ENCODE measurements at regions of chr2 and their contacts with region 1.

Region 1: DNA sequence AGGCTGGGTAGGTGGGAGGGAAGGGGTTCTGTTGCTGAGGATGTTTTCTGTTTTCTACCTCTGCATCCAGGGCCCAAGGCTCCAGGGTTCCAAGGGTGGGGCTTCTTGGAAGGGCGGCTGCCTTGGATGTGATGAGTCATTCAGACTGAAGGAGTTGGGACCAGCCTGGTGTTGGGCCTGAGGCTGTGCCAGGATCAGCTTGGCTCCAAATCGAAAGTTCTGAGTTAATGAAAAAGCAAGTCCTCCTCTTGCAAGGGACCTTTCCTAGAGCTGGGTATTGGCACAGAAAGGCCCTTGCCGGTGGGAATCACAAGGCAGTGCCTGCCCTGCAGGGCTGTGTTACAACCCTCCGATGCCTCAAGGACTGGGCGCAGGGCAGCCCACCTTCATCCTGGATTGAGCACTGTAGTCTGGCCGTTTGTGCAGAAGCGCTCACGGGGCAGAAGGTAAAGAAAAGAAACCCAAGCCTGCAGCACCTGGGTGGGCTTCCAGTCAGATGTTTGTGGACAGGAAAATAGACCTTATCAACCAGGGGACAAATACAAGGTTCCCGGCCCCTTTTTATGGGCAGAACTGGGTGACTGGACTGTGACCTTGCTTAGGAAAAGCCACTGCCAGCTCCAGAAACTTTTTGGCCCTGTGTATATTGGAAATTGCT is 52.5 kb upstream of the MCFD2 start:
- DNase-seq: peak; percentile 90 to 91
- H3K4me3 ChIP-seq: peak overlapping the region; percentile 36; the same call in 1 of the 2 replicates
- H3K27ac ChIP-seq: peak overlapping the region; percentile 93
- H3K4me1 ChIP-seq: peaks cover 89% of the 10 kb centered on the region
- H3K27me3 ChIP-seq: no peaks in the 10 kb centered on the region
- CTCF ChIP-seq: no peak

Region 2: GRCh38 chr2:46780801-46781445 is 187.2 kb before region 1 on chr2:
- CTCF ChIA-PET with region 1: no interaction called
- POLR2A ChIA-PET with region 1: no interaction called
- intact Hi-C with region 1: no loop called
- DNase-seq: no peak
- H3K4me3 ChIP-seq: no peak overlapping the region
- H3K27ac ChIP-seq: no peak overlapping the region
- H3K4me1 ChIP-seq: peaks cover 9% of the 10 kb centered on the region
- H3K27me3 ChIP-seq: no peaks in the 10 kb centered on the region
- CTCF ChIP-seq: no peak

Region 3: GRCh38 chr2:46850777-46851176 is 117.3 kb before region 1 on chr2:
- CTCF ChIA-PET with region 1: no interaction called
- POLR2A ChIA-PET with region 1: no interaction called
- intact Hi-C with region 1: loop called (anchors 2 kb)
- DNase-seq: peak; percentile 67 to 75
- H3K4me3 ChIP-seq: no peak overlapping the region
- H3K27ac ChIP-seq: peak overlapping the region; percentile 45
- H3K4me1 ChIP-seq: peaks cover 77% of the 10 kb centered on the region
- H3K27me3 ChIP-seq: no peaks in the 10 kb centered on the region
- CTCF ChIP-seq: no peak

Region 4: DNA sequence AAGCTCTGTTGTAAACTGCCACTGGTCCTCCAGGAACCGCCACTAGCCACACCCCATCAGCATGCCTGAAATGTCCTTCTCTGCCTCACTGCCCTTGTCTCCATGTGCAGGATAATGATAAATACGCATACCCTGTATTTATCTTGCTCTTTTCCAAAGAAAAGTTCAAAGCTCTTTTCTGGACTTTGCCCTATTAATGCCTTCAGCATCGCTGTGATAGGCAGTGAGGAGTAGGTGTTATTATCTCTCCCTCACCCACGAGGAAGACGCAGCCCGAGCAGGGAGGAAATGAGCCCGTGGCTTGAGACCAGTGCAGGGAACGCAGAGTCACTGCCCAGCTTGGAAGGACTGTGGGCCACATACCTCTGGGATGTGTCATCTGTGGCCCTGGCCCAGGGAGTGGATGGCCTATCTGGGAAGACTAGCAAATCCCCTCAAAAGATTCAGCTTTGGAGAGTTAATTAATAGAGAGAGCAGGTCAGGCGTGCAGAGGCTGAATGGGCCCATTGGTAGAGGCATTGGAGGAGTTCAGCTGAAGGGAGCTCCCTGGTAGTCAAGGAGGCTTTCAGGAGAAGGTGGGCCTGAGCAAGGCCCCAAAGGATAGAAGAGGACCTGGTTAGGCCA is 13.1 kb before region 1 on chr2:
- CTCF ChIA-PET with region 1: interaction called, 4 read pairs
- POLR2A ChIA-PET with region 1: interaction called, 13 read pairs
- intact Hi-C with region 1: loop called (anchors 1 kb)
- DNase-seq: peak; percentile 90 to 95
- H3K4me3 ChIP-seq: peak overlapping the region; percentile 4; the same call in 1 of the 2 replicates
- H3K27ac ChIP-seq: peak overlapping the region; percentile 76
- H3K4me1 ChIP-seq: peaks cover 38% of the 10 kb centered on the region
- H3K27me3 ChIP-seq: no peaks in the 10 kb centered on the region
- CTCF ChIP-seq: no peak

Region 5: DNA sequence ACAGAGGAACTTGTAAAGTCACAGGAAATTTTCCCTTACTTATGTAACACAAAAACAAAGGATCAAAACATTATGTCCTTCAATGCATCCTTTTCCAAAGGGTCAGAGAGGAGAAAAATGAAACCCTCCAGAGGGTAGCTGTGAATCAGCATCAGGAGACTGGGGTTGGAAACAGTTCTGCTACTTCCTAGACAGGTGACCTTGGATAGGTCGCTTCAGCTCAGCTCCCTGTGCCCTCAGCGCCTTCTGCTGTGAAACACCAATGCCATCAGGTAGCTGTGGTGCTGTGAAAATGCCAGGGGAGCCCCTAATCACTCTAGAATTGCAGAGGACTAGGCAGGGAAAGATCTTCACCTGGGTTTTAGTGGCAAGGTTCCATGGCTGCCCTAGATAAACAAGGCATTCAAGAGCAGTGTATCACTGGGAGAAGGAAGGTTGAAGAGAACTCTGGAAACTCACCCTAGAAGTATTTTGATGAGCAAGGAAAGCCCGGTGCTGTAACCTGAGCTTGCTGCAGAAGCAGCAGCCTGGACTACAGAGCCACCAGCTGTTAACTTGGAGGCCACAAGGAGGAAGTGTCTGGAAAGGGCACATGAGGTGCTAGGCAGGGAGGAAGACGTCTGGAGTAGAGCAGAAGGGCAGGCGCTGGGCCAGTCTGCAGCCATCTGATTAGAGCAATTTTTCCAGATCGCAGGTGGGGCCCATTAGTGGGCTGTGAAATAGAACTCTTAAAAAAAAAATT is 48.2 kb after region 1 on chr2:
- CTCF ChIA-PET with region 1: no interaction called
- POLR2A ChIA-PET with region 1: no interaction called
- intact Hi-C with region 1: loop called (anchors 1 kb)
- DNase-seq: peak; percentile 87 to 100
- H3K4me3 ChIP-seq: no peak overlapping the region
- H3K27ac ChIP-seq: peak overlapping the region; percentile 86
- H3K4me1 ChIP-seq: peaks cover 36% of the 10 kb centered on the region
- H3K27me3 ChIP-seq: no peaks in the 10 kb centered on the region
- CTCF ChIP-seq: 0 out of 2 replicates have a peak, but pooled peaks have one; percentile 31

Region 6: DNA sequence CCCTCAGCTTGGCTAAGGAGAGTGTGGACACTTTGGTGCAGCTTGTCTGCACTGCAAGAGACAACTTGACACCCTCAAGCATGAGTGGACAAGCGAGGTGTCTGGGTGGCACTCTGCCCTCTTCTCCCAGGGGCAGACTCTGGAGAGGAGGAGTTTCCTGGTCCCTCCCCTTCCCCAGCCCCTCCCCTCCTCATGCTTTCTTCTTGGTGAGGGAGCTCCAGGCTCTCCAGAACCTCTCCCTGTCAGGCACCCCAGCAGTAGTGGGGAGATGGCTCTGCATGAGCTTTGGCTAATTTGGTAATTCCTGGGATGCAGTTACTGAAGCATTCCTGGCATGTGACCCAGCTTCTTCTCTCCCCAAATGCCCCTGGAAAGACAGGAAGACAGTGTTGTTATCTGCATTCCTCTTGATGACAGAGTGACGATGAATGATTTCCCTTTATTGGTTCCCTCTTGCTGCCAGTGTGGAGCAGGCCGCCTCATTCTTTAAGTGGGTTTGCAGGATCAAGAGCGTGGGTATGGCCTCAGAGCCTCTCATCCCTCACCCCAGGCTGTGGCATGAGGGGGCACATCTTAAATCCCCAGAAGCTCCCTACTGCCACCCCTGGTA is 97.8 kb after region 1 on chr2:
- CTCF ChIA-PET with region 1: no interaction called
- POLR2A ChIA-PET with region 1: interaction called, 11 read pairs
- intact Hi-C with region 1: no loop called
- DNase-seq: peak; percentile 65 to 78
- H3K4me3 ChIP-seq: no peak overlapping the region
- H3K27ac ChIP-seq: peak overlapping the region; percentile 44
- H3K4me1 ChIP-seq: peaks cover 66% of the 10 kb centered on the region
- H3K27me3 ChIP-seq: no peaks in the 10 kb centered on the region
- CTCF ChIP-seq: no peak

Measured in PC-9 (cell line).